ENCODE measurements at regions of chr3 and their contacts with region 1.

Region 1: GRCh38 chr3:132522353-132522752 is 74.7 kb upstream of the ACKR4 start:
- DNase-seq: no peak
- H3K4me3 ChIP-seq: no peak overlapping the region
- H3K27ac ChIP-seq: no peak overlapping the region
- H3K4me1 ChIP-seq: peaks cover 0 to 10% of the 10 kb centered on the region in 2 donors
- H3K27me3 ChIP-seq: no peaks in the 10 kb centered on the region
- CTCF ChIP-seq: no peak
- POLR2A ChIP-seq: no peak

Region 2: GRCh38 chr3:132445817-132446216 is 76.5 kb before region 1 on chr3:
- intact Hi-C with region 1: no loop called
- DNase-seq: no peak
- H3K4me3 ChIP-seq: no peak overlapping the region
- H3K27ac ChIP-seq: no peak overlapping the region
- H3K4me1 ChIP-seq: peaks cover 0 to 32% of the 10 kb centered on the region in 2 donors
- H3K27me3 ChIP-seq: no peaks in the 10 kb centered on the region
- CTCF ChIP-seq: no peak
- POLR2A ChIP-seq: no peak

Region 3: DNA sequence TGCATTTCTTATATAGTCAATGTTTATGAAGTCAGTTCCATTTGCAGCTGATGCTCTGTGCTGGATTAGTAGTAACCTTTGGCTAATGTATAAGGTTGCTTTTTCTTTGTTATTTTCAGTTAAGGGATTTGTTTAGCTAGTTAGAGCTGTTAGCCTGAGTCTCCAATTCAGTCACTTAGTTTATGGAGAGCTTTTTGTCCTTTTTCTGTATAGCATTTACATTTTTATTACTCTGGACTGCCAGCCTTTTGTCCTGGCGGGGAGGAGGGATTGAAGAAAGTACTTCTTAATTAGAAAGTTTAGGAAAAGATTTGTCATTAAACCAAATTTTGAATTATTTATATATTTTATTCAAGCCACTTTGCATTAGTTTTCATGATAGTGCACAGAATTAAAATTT is 53.0 kb before region 1 on chr3:
- intact Hi-C with region 1: loop called in 1 of 2 experiments (anchors 10 kb)
- DNase-seq: no peak
- H3K4me3 ChIP-seq: no peak overlapping the region
- H3K27ac ChIP-seq: no peak overlapping the region
- H3K4me1 ChIP-seq: no peaks in the 10 kb centered on the region
- H3K27me3 ChIP-seq: no peaks in the 10 kb centered on the region
- CTCF ChIP-seq: no peak
- POLR2A ChIP-seq: no peak